B cell (primary cell): ENCODE measurements at regions of chr1 and their contacts with region 1.

Region 1: GRCh38 chr1:94926915-94927404 is at the start of gene CNN3:
- DNase-seq: peak; percentile 86
- ATAC-seq: peak; percentile 85
- H3K4me3 ChIP-seq: peak within 1 kb of the TSS; percentile 56 to 67 (median 61)
- H3K4me3 Mint-ChIP-seq: peak within 1 kb of the TSS; percentile 95
- H3K27ac ChIP-seq: peak within 1 kb of the TSS in 1 of 2 donors; percentile 82
- H3K27ac Mint-ChIP-seq: peak within 1 kb of the TSS; percentile 80
- H3K4me1 ChIP-seq: peaks cover 24 to 28% of the 10 kb centered on the region in 2 donors
- H3K4me1 Mint-ChIP-seq: peaks cover 26% of the 10 kb centered on the region
- H3K27me3 ChIP-seq: peaks cover 0 to 30% (median 9%) of the 10 kb centered on the region in 4 experiments
- H3K27me3 Mint-ChIP-seq: peaks cover 27% of the 10 kb centered on the region
- CTCF ChIP-seq: no peak
- total RNA-seq, gene CNN3: 17.2 and 21.1 TPM in 2 replicates

Region 2: DNA sequence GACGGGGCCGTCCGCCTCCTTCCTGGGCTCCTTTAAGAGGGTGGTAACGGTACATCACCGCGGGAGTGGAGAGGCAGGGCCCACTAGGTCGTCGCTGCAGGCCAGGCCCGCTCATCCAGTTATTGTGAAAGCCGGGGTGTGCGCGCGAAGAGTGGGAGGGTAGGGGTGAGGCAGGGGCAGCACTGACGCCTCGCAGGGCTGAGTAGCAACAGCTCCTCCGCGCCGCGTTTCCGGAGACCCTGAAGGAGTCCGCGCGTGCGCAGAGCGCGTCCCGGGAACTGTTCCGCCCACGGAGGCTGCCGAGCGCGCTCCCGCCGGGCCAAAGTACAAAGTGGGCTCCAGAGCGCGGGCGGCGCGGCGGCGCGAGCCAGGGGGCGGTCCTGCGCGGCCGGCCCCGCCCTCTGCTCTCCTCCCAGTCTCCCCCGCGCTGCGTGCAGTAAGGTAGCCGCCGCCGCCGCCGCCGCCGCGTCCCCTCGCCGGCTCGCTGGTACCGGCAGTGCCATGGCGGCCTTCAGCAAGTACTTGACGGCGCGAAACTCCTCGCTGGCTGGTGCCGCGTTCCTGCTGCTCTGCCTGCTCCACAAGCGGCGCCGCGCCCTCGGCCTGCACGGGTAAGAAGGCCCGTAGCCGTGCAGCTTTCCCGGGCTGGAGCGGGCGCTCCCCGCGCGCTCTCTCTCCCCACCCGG is 508.8 kb before region 1 on chr1 and contains the start of gene ABCD3:
- CTCF ChIA-PET with region 1: no interaction called
- POLR2A ChIA-PET with region 1: no interaction called
- intact Hi-C with region 1: loop called (anchors 1 kb)
- DNase-seq: peak; percentile 98
- ATAC-seq: peak; percentile 95
- H3K4me3 ChIP-seq: peak within 1 kb of the TSS; percentile 67 to 89 (median 85)
- H3K4me3 Mint-ChIP-seq: no peak within 1 kb of the TSS
- H3K27ac ChIP-seq: peak within 1 kb of the TSS; percentile 73 to 80
- H3K27ac Mint-ChIP-seq: peak within 1 kb of the TSS; percentile 77
- H3K4me1 ChIP-seq: peaks cover 12 to 15% of the 10 kb centered on the region in 2 donors
- H3K4me1 Mint-ChIP-seq: peaks cover 22% of the 10 kb centered on the region
- H3K27me3 ChIP-seq: peaks cover 0 to 5% (median 2%) of the 10 kb centered on the region in 4 experiments
- H3K27me3 Mint-ChIP-seq: peaks cover 7% of the 10 kb centered on the region
- CTCF ChIP-seq: no peak
- total RNA-seq, gene ABCD3: 19.4 and 21.0 TPM in 2 replicates

Region 3: GRCh38 chr1:94962409-94963265 is 35.7 kb after region 1 on chr1:
- CTCF ChIA-PET with region 1: no interaction called
- POLR2A ChIA-PET with region 1: interaction called, 4 read pairs
- intact Hi-C with region 1: loop called (anchors 1 kb)
- DNase-seq: peak; percentile 76
- ATAC-seq: peak; percentile 90
- H3K4me3 ChIP-seq: peak overlapping the region; percentile 6 to 74 (median 52)
- H3K4me3 Mint-ChIP-seq: peak overlapping the region; percentile 86
- H3K27ac ChIP-seq: peak overlapping the region; percentile 66 to 78
- H3K27ac Mint-ChIP-seq: peak overlapping the region; percentile 88
- H3K4me1 ChIP-seq: peaks cover 25 to 31% of the 10 kb centered on the region in 2 donors
- H3K4me1 Mint-ChIP-seq: peaks cover 30% of the 10 kb centered on the region
- H3K27me3 ChIP-seq: no peaks in the 10 kb centered on the region
- H3K27me3 Mint-ChIP-seq: no peaks in the 10 kb centered on the region
- CTCF ChIP-seq: no peak

Region 4: DNA sequence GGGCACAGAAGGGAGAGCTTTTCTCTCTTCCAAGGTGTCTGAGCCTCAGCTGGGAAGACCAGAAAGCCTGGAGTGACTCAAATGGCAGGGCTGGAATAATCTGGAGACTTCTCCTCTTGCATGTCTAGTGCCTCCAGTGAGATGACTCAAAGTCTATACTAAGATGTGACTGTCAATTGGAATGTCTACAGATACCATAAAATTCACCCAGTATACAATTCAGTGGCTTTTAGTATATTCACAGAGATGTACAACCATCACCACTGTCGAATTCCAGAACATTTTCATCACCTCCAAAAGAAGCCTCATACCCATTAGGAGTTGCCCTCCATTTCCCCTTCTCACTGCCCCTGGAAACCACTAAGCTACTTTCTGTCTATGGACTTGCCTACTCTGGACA is 47.9 kb after region 1 on chr1:
- CTCF ChIA-PET with region 1: no interaction called
- POLR2A ChIA-PET with region 1: interaction called, 3 read pairs
- intact Hi-C with region 1: loop called (anchors 5 kb)
- DNase-seq: no peak
- ATAC-seq: no peak
- H3K4me3 ChIP-seq: no peak overlapping the region
- H3K4me3 Mint-ChIP-seq: no peak overlapping the region
- H3K27ac ChIP-seq: no peak overlapping the region
- H3K27ac Mint-ChIP-seq: no peak overlapping the region
- H3K4me1 ChIP-seq: peaks cover 14 to 18% of the 10 kb centered on the region in 2 donors
- H3K4me1 Mint-ChIP-seq: peaks cover 13% of the 10 kb centered on the region
- H3K27me3 ChIP-seq: no peaks in the 10 kb centered on the region
- H3K27me3 Mint-ChIP-seq: no peaks in the 10 kb centered on the region
- CTCF ChIP-seq: no peak